ENCODE measurements at regions of chr4 and their contacts with region 1.

Region 1: GRCh38 chr4:57220734-57221133 is 110.5 kb upstream of the IGFBP7 start:
- DNase-seq: no peak
- H3K4me3 ChIP-seq: no peak overlapping the region
- H3K27ac ChIP-seq: no peak overlapping the region
- H3K4me1 ChIP-seq: no peaks in the 10 kb centered on the region
- H3K27me3 ChIP-seq: no peaks in the 10 kb centered on the region
- CTCF ChIP-seq: no peak
- EP300 ChIP-seq: no peak
- POLR2A ChIP-seq: no peak

Region 2: GRCh38 chr4:57243076-57243475 is 22.3 kb after region 1 on chr4:
- in situ Hi-C with region 1: no loop called
- intact Hi-C with region 1: loop called (anchors 1 kb)
- DNase-seq: no peak
- H3K4me3 ChIP-seq: no peak overlapping the region
- H3K27ac ChIP-seq: no peak overlapping the region
- H3K4me1 ChIP-seq: no peaks in the 10 kb centered on the region
- H3K27me3 ChIP-seq: no peaks in the 10 kb centered on the region
- CTCF ChIP-seq: no peak
- EP300 ChIP-seq: no peak
- POLR2A ChIP-seq: no peak